ENCODE measurements at regions of chr22 and their contacts with region 1.

Region 1: GRCh38 chr22:39490135-39490798 is 11.8 kb upstream of the MIEF1 start:
- DNase-seq: peak; percentile 85
- H3K4me3 Mint-ChIP-seq: no peak overlapping the region
- H3K27ac Mint-ChIP-seq: no peak overlapping the region
- H3K4me1 Mint-ChIP-seq: peaks cover 19% of the 10 kb centered on the region
- H3K27me3 Mint-ChIP-seq: peaks cover 4% of the 10 kb centered on the region

Region 2: DNA sequence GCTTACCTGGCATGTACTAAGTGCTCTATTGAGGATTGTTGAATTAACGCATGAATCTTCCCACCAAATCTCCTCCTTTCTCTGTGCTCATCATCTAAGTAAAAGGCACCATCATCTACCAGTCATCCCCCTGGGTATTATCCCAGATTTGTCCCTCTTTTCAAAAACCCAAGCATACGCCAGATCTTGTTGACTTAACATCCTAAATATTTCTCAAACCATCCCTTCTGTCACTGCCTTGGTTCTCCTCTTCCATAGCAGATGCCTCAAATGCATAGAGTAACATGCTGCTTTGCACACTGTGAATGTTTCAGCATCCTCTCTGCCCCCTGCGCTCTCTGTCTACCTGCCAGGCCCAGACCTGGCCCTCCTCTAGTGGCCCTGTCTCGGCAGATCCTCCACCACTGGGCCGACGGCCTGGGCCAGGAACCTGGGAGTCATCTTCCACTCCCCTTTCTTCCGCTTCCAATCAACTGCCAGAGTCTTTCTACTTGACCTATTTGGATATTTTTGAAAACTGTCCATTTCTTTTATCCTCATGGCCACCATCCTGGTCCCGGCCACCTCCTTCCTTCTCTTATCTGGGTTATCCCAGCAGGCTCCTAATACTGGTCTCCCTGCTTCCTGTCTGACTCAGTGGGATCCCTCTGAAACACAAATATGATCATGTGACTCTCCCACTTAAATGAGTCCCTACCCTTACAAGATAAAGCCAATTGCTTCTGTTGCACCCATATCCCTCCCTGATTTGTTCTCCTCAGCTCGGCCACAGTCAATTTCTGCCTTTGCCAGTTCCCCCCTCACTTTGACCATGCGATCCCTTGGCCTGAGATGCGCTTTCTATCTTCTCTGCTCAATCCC is 94.1 kb before region 1 on chr22:
- CTCF ChIA-PET with region 1: interaction called, 13 read pairs
- DNase-seq: no peak
- H3K4me3 Mint-ChIP-seq: no peak overlapping the region
- H3K27ac Mint-ChIP-seq: no peak overlapping the region
- H3K4me1 Mint-ChIP-seq: peaks cover 16% of the 10 kb centered on the region
- H3K27me3 Mint-ChIP-seq: peaks cover 9% of the 10 kb centered on the region

Region 3: GRCh38 chr22:39466228-39467111 is 23.8 kb before region 1 on chr22:
- CTCF ChIA-PET with region 1: no interaction called
- DNase-seq: no peak
- H3K4me3 Mint-ChIP-seq: no peak overlapping the region
- H3K27ac Mint-ChIP-seq: no peak overlapping the region
- H3K4me1 Mint-ChIP-seq: peaks cover 34% of the 10 kb centered on the region
- H3K27me3 Mint-ChIP-seq: peaks cover 12% of the 10 kb centered on the region

Region 4: DNA sequence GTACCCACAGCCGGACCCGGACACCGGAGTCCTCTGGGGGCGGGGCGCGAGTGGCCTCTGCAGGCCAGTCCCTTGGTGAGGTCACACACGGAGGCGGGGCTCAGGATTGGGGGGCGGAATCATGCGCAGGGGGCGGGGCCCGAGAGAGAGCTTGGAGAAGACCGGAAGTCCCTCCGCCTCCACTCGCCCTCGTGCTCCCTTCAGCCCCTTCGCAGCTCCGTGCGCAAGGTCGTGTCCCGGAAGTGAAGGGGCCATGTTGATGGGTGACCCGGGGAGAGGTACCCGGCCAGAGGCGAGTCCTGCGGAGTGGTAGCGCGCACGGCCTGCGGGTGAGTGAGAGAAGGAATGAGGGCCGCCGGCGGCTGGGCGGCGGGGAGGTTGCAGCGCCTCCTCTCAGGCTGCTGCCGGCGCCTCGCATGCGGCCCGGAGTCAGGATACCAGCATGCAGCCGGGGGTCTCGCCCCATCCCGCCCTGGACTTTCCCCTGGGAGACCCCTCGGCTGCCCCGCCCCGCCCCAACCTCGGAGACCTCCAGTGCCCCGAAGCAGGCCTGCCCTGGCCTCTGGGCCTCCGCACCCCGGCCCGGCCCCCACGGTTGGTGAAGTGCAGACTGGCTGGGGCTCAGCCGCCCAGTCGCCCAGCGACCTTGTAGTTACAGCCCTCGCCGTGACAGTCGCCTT is 12.0 kb after region 1 on chr22 and contains the start of gene MIEF1:
- CTCF ChIA-PET with region 1: interaction called, 15 read pairs
- DNase-seq: peak; percentile 94
- H3K4me3 Mint-ChIP-seq: peak within 1 kb of the TSS; percentile 93
- H3K27ac Mint-ChIP-seq: peak within 1 kb of the TSS; percentile 88
- H3K4me1 Mint-ChIP-seq: peaks cover 43% of the 10 kb centered on the region
- H3K27me3 Mint-ChIP-seq: peaks cover 21% of the 10 kb centered on the region

Region 5: GRCh38 chr22:39723899-39724351 is 233.7 kb after region 1 on chr22:
- CTCF ChIA-PET with region 1: no interaction called
- DNase-seq: no peak
- H3K4me3 Mint-ChIP-seq: no peak overlapping the region
- H3K27ac Mint-ChIP-seq: no peak overlapping the region
- H3K4me1 Mint-ChIP-seq: peaks cover 10% of the 10 kb centered on the region
- H3K27me3 Mint-ChIP-seq: peaks cover 44% of the 10 kb centered on the region

Region 6: DNA sequence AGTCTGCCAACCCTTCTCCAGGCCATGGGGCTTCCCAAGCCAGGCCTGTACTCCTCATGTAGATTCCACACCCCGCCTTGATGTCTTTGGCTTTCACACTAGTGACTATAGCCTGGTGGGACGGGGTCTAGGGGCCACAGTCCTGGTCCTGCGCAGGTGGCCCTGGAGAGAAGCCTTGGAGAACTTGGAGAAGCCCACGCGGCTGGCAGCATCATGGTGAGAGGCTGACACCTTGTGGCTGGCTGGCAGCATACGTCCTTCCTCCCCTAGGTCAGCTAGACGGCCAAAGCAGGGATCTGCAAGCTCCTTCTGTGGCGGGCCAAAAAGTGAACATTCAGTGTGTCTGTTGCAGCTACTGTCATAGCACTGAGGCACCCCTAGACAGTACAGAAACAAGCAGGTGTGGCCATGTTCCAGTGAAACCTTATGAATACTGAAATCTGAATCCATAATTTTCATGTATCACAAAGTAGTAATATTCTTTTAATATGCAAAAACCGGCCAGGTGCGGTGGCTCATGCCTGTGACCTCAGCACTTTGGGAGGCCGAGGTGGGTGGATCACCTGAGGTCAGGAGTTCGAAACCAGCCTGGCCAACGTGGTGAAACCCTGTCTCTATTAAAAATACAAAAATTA is 546.4 kb after region 1 on chr22:
- CTCF ChIA-PET with region 1: interaction called, 10 read pairs
- DNase-seq: peak; percentile 71
- H3K4me3 Mint-ChIP-seq: no peak overlapping the region
- H3K27ac Mint-ChIP-seq: no peak overlapping the region
- H3K4me1 Mint-ChIP-seq: peaks cover 5% of the 10 kb centered on the region
- H3K27me3 Mint-ChIP-seq: peaks cover 60% of the 10 kb centered on the region